ENCODE measurements at regions of chr1 and their contacts with region 1.

Region 1: DNA sequence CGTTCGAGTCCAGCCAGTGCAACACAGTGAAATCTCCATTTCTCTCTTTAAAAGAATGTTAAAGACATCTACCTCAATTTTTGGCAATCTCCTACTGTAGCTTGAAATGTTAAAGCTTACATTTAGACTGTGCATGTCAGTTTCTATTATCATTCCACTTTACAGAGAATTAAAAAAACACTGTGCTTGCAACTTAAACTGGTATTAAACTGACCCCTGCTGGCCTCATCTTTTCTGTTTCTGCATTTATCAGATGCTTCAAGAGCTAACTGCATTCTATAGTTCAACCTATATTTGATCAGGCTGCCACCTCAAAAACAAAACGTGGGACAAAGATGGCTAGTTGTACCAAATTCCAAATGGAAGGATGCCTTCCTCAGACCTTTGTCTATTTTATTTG is 226.5 kb downstream of the SMYD3 start:
- DNase-seq: no peak
- H3K4me3 ChIP-seq: no peak overlapping the region
- H3K27me3 ChIP-seq: no peaks in the 10 kb centered on the region
- CTCF ChIP-seq: peak; percentile 24; the same call in 1 of the 2 replicates

Region 2: GRCh38 chr1:246459221-246459620 is 178.7 kb after region 1 on chr1:
- CTCF ChIA-PET with region 1: no interaction called
- POLR2A ChIA-PET with region 1: interaction called, 13 read pairs
- DNase-seq: no peak
- H3K4me3 ChIP-seq: no peak overlapping the region
- H3K27me3 ChIP-seq: no peaks in the 10 kb centered on the region
- CTCF ChIP-seq: no peak

Region 3: GRCh38 chr1:246544001-246544400 is 263.4 kb after region 1 on chr1:
- CTCF ChIA-PET with region 1: no interaction called
- POLR2A ChIA-PET with region 1: no interaction called
- DNase-seq: no peak
- H3K4me3 ChIP-seq: no peak overlapping the region
- H3K27me3 ChIP-seq: no peaks in the 10 kb centered on the region
- CTCF ChIP-seq: no peak